ENCODE measurements at regions of chr11 and their contacts with region 1.

Region 1: DNA sequence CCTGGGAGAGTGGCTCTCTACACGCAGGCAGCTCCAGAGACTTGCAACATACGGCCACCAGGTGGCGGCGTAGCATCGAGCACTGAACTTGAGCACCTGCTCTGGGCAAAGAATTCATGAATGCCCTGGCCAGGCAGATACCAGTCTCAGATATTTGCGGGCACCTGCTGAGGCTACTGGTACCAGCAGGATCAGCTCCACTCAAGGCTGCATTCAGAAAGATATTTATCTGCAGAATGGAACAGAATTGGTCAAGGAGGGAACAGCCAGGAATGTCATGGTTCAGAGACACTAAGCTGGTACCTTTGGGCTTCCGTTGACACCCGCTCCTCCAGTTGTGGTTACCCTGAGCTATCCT is 10.8 kb upstream of the CCDC86 start:
- DNase-seq: peak; percentile 94
- H3K4me3 ChIP-seq: no peak overlapping the region
- H3K27ac ChIP-seq: peak overlapping the region in 1 of 8 donors; percentile 11
- H3K4me1 ChIP-seq: peaks cover 0 to 28% (median 7%) of the 10 kb centered on the region in 6 donors
- H3K27me3 ChIP-seq: peaks cover 0 to 7% (median 0%) of the 10 kb centered on the region in 7 donors
- CTCF ChIP-seq: peak; percentile 81 to 96 (median 90)
- POLR2A ChIP-seq: no peak

Region 2: GRCh38 chr11:60615497-60615896 is 215.6 kb before region 1 on chr11:
- intact Hi-C with region 1: no loop called
- DNase-seq: no peak
- H3K4me3 ChIP-seq: no peak overlapping the region
- H3K27ac ChIP-seq: no peak overlapping the region
- H3K4me1 ChIP-seq: peaks cover 0 to 8% (median 0%) of the 10 kb centered on the region in 6 donors
- H3K27me3 ChIP-seq: no peaks in the 10 kb centered on the region
- CTCF ChIP-seq: no peak
- POLR2A ChIP-seq: no peak

Region 3: GRCh38 chr11:60887556-60887955 is 56.4 kb after region 1 on chr11:
- intact Hi-C with region 1: loop called (anchors 5 kb)
- DNase-seq: no peak
- H3K4me3 ChIP-seq: no peak overlapping the region
- H3K27ac ChIP-seq: no peak overlapping the region
- H3K4me1 ChIP-seq: peaks cover 0 to 23% (median 17%) of the 10 kb centered on the region in 6 donors
- H3K27me3 ChIP-seq: no peaks in the 10 kb centered on the region
- CTCF ChIP-seq: peak in 9 of 11 experiments; percentile 10 to 52 (median 37)
- POLR2A ChIP-seq: no peak

Region 4: DNA sequence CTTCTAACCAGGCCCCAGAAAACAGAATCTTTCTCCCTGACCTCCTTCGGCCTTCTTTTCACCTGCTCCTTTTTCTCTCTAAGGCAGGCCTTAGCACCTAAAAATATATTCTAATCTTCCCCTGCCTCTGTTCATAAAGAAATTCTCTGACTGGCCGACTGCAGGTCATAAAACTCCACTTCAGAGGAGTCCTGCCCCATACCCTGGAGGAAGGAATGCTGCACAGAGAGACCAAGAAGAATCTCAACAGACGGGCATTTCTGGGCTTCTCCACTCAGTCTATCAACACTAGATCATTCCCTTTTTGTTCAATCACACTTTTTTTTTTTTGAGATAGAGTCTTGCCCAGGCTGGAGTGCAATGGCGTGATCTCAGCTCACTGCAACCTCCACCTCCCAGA is 352.5 kb after region 1 on chr11:
- intact Hi-C with region 1: loop called (anchors 2 kb)
- DNase-seq: no peak
- H3K4me3 ChIP-seq: no peak overlapping the region
- H3K27ac ChIP-seq: no peak overlapping the region
- H3K4me1 ChIP-seq: peaks cover 0 to 8% (median 6%) of the 10 kb centered on the region in 6 donors
- H3K27me3 ChIP-seq: no peaks in the 10 kb centered on the region
- CTCF ChIP-seq: no peak
- POLR2A ChIP-seq: no peak